CD8-positive, alpha-beta T cell (primary cell): ENCODE measurements at regions of chr4 and their contacts with region 1.

Region 1: GRCh38 chr4:55395529-55396307 is at the start of gene TMEM165:
- DNase-seq: peak; percentile 72 to 93 (median 86)
- ATAC-seq: peak; percentile 94
- H3K4me3 ChIP-seq: peak within 1 kb of the TSS; percentile 68 to 74
- H3K4me3 Mint-ChIP-seq: peak within 1 kb of the TSS; percentile 97
- H3K27ac ChIP-seq: peak within 1 kb of the TSS; percentile 83 to 93
- H3K27ac Mint-ChIP-seq: peak within 1 kb of the TSS; percentile 98
- H3K4me1 ChIP-seq: peaks cover 36% of the 10 kb centered on the region
- H3K4me1 Mint-ChIP-seq: peaks cover 38% of the 10 kb centered on the region
- H3K27me3 ChIP-seq: no peaks in the 10 kb centered on the region
- H3K27me3 Mint-ChIP-seq: no peaks in the 10 kb centered on the region
- CTCF ChIP-seq: peak; percentile 0
- total RNA-seq, gene TMEM165: 31.0 to 31.5 TPM

Region 2: GRCh38 chr4:55435141-55435841 is 39.6 kb after region 1 on chr4:
- CTCF ChIA-PET with region 1: interaction called, 4 read pairs
- POLR2A ChIA-PET with region 1: interaction called, 5 read pairs
- intact Hi-C with region 1: loop called in 1 of 2 experiments (anchors 5 kb)
- DNase-seq: peak in 3 of 9 experiments; percentile 13 to 26 (median 16)
- ATAC-seq: peak; percentile 36
- H3K4me3 ChIP-seq: no peak overlapping the region
- H3K4me3 Mint-ChIP-seq: no peak overlapping the region
- H3K27ac ChIP-seq: peak overlapping the region in 1 of 2 experiments; percentile 1
- H3K27ac Mint-ChIP-seq: peak overlapping the region; percentile 80
- H3K4me1 ChIP-seq: no peaks in the 10 kb centered on the region
- H3K4me1 Mint-ChIP-seq: peaks cover 14% of the 10 kb centered on the region
- H3K27me3 ChIP-seq: no peaks in the 10 kb centered on the region
- H3K27me3 Mint-ChIP-seq: no peaks in the 10 kb centered on the region
- CTCF ChIP-seq: no peak